Activated CD8-positive, alpha-beta T cell treated with anti-CD3 and anti-CD28 coated beads for 36 hours (primary cell): ENCODE measurements at regions of chr1 and their contacts with region 1.

Region 1: GRCh38 chr1:33001282-33001681 is 35.4 kb downstream of the AK2 start:
- DNase-seq: peak; percentile 31
- ATAC-seq: no peak
- H3K4me3 Mint-ChIP-seq: no peak overlapping the region
- H3K27ac Mint-ChIP-seq: no peak overlapping the region
- H3K4me1 Mint-ChIP-seq: peaks cover 23% of the 10 kb centered on the region
- H3K27me3 Mint-ChIP-seq: no peaks in the 10 kb centered on the region
- CTCF ChIP-seq: peak; percentile 15

Region 2: DNA sequence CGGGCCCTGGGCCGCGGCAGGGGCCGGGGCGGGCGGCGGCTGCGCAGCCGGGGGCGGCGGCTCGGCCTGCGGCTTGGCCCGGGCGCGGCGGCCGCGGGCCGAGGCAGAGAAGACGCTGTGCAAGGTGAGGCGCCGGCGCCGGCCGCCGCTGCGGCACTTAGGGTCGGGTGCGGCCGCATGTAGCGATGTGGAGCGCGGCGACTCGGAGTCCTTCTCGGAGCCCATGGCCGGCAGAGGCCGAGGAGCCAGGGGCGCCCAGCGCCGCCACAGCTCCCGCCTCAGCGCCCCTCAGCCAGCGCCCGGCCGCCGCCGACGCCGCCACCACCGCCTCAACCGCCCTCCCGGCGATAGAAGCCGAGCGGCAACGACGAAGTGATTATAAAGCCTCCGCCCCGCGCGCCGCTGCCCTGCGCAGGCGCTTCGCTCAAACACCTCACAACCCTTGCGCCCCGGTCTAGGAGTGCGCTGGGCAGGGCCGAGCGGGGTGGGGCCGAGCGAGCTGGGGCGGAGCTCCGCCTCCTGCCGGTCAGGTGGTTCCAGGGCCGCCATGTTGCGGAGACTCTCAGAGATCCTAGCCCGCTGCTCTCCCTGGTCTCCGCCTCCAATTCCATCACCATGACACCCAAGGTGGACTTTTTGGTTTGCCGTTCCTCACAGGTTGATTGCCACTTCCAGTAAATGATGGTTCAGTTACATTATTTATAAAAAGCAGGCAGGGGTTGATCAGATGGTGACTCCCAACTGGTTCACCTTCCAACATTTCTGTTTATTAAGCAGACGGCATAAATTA is 36.6 kb before region 1 on chr1 and contains the start of gene RNF19B:
- CTCF ChIA-PET with region 1: no interaction called
- POLR2A ChIA-PET with region 1: no interaction called
- intact Hi-C with region 1: loop called (anchors 5 kb)
- DNase-seq: peak; percentile 96
- ATAC-seq: peak; percentile 97
- H3K4me3 Mint-ChIP-seq: peak within 1 kb of the TSS; percentile 79
- H3K27ac Mint-ChIP-seq: peak within 1 kb of the TSS; percentile 89
- H3K4me1 Mint-ChIP-seq: peaks cover 46% of the 10 kb centered on the region
- H3K27me3 Mint-ChIP-seq: no peaks in the 10 kb centered on the region
- CTCF ChIP-seq: no peak
- total RNA-seq, gene RNF19B: 10.6 to 10.9 TPM